CD4-positive, alpha-beta memory T cell (primary cell): ENCODE measurements at regions of chr18 and their contacts with region 1.

Region 1: DNA sequence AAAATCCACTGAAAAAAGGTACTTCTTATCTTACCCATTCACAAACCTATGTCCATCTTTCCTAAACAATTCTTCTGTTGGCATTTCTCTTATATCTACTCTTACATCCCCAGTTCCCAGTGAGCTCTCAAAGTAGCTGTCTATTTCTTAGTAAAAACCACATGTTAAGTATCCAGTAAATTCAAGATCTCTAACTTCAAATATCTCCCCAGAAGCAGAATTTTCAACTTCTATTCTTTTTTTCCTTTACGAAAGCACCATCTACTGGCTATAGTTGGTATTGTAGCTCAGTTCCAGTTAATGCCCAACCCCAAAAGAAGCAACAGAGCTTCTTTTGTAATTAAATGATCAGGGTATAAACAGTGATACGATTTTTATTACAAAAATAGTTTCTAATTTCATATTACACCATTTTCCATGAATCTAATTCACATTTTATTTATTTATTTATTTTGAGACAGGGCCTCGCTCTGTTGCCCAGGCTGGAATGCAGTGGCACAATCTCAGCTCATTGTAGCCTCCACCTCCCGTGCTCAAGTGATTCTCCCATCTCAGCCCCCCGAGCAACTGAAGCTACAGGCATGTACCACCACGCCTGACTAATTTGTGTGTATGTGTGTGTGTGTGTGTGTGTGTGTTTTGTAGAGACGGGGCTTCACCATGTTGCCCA is 28.5 kb downstream of the HRH4 start:
- DNase-seq: peak in 4 of 5 donors; percentile 29 to 53 (median 37)
- H3K4me3 ChIP-seq: no peak overlapping the region
- H3K4me3 Mint-ChIP-seq: peak overlapping the region in 1 of 8 donors; percentile 30
- H3K27ac ChIP-seq: no peak overlapping the region
- H3K27ac Mint-ChIP-seq: peak overlapping the region in 1 of 7 donors; percentile 53
- H3K4me1 ChIP-seq: no peaks in the 10 kb centered on the region
- H3K4me1 Mint-ChIP-seq: peaks cover 12 to 23% (median 15%) of the 10 kb centered on the region in 4 donors
- H3K27me3 ChIP-seq: no peaks in the 10 kb centered on the region
- H3K27me3 Mint-ChIP-seq: peaks cover 0 to 15% of the 10 kb centered on the region in 2 donors

Region 2: GRCh38 chr18:24246143-24246542 is 242.8 kb before region 1 on chr18:
- CTCF ChIA-PET with region 1: no interaction called
- POLR2A ChIA-PET with region 1: no interaction called
- intact Hi-C with region 1: no loop called
- DNase-seq: no peak
- H3K4me3 ChIP-seq: no peak overlapping the region
- H3K4me3 Mint-ChIP-seq: no peak overlapping the region
- H3K27ac ChIP-seq: no peak overlapping the region
- H3K27ac Mint-ChIP-seq: no peak overlapping the region
- H3K4me1 ChIP-seq: no peaks in the 10 kb centered on the region
- H3K4me1 Mint-ChIP-seq: peaks cover 0 to under 1% (median 0%) of the 10 kb centered on the region in 4 donors
- H3K27me3 ChIP-seq: no peaks in the 10 kb centered on the region
- H3K27me3 Mint-ChIP-seq: peaks cover 3 to 13% of the 10 kb centered on the region in 2 donors

Region 3: GRCh38 chr18:24362758-24363157 is 126.2 kb before region 1 on chr18:
- CTCF ChIA-PET with region 1: interaction called, 274 read pairs
- POLR2A ChIA-PET with region 1: interaction called, 3 read pairs
- intact Hi-C with region 1: loop called (anchors 1 kb)
- DNase-seq: no peak
- H3K4me3 ChIP-seq: no peak overlapping the region
- H3K4me3 Mint-ChIP-seq: no peak overlapping the region
- H3K27ac ChIP-seq: no peak overlapping the region
- H3K27ac Mint-ChIP-seq: no peak overlapping the region
- H3K4me1 ChIP-seq: no peaks in the 10 kb centered on the region
- H3K4me1 Mint-ChIP-seq: no peaks in the 10 kb centered on the region
- H3K27me3 ChIP-seq: no peaks in the 10 kb centered on the region
- H3K27me3 Mint-ChIP-seq: no peaks in the 10 kb centered on the region

Region 4: GRCh38 chr18:24432618-24433017 is 56.3 kb before region 1 on chr18:
- CTCF ChIA-PET with region 1: interaction called, 20 read pairs
- POLR2A ChIA-PET with region 1: no interaction called
- intact Hi-C with region 1: no loop called
- DNase-seq: no peak
- H3K4me3 ChIP-seq: no peak overlapping the region
- H3K4me3 Mint-ChIP-seq: no peak overlapping the region
- H3K27ac ChIP-seq: no peak overlapping the region
- H3K27ac Mint-ChIP-seq: no peak overlapping the region
- H3K4me1 ChIP-seq: peaks cover 3% of the 10 kb centered on the region
- H3K4me1 Mint-ChIP-seq: peaks cover 4 to 12% (median 11%) of the 10 kb centered on the region in 4 donors
- H3K27me3 ChIP-seq: no peaks in the 10 kb centered on the region
- H3K27me3 Mint-ChIP-seq: no peaks in the 10 kb centered on the region

Region 5: GRCh38 chr18:24462838-24463775 is 25.9 kb before region 1 on chr18:
- CTCF ChIA-PET with region 1: interaction called, 31 read pairs
- POLR2A ChIA-PET with region 1: no interaction called
- intact Hi-C with region 1: no loop called
- DNase-seq: no peak
- H3K4me3 ChIP-seq: no peak overlapping the region
- H3K4me3 Mint-ChIP-seq: peak overlapping the region in 7 of 8 donors; percentile 50 to 86 (median 77)
- H3K27ac ChIP-seq: no peak overlapping the region
- H3K27ac Mint-ChIP-seq: peak overlapping the region in 2 of 7 donors; percentile 67 to 75
- H3K4me1 ChIP-seq: no peaks in the 10 kb centered on the region
- H3K4me1 Mint-ChIP-seq: peaks cover 13 to 22% (median 16%) of the 10 kb centered on the region in 4 donors
- H3K27me3 ChIP-seq: no peaks in the 10 kb centered on the region
- H3K27me3 Mint-ChIP-seq: no peaks in the 10 kb centered on the region

Region 6: DNA sequence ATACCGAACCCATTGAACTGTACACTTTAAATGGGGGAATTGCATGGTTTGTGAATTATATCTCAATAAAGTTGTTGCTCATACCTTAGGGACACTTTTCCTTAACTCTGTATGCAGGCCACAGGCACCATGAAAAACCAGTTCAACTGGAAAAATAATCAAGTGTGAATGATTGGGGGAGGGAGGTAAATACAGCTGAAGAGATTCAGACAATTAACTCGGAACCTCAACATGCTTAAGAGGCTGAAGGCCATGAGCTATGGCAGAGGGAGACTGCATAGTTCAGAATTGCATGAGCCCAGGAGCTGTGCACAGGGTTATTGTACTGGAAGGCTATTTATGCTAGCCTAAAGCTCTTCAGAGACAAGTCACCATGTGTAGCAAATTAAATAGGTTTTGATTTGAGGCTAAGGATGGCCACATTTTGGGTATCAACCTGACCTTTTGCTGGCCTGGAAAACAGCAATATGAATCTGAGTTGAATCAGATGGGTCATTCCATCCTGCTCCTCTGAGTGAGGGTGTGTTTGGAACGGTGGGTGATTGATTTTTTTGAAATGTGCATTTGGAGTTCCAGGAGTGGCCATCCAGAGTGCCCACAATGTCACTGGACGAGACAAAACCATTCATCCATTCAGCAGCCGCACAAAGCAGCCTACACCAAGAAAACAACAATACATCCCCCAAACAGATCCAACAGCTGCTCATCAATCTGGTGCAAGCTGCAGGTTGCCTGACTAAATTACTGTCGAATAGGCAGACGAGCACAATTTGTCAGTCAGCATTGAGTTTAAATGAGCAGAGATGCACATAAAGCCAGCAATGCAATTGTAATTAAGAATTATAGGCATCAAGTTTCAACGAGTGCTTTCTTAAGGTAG is 13.9 kb after region 1 on chr18:
- CTCF ChIA-PET with region 1: interaction called, 18 read pairs
- POLR2A ChIA-PET with region 1: no interaction called
- intact Hi-C with region 1: no loop called
- DNase-seq: no peak
- H3K4me3 ChIP-seq: no peak overlapping the region
- H3K4me3 Mint-ChIP-seq: no peak overlapping the region
- H3K27ac ChIP-seq: no peak overlapping the region
- H3K27ac Mint-ChIP-seq: no peak overlapping the region
- H3K4me1 ChIP-seq: no peaks in the 10 kb centered on the region
- H3K4me1 Mint-ChIP-seq: no peaks in the 10 kb centered on the region
- H3K27me3 ChIP-seq: no peaks in the 10 kb centered on the region
- H3K27me3 Mint-ChIP-seq: peaks cover 8 to 15% of the 10 kb centered on the region in 2 donors

Region 7: DNA sequence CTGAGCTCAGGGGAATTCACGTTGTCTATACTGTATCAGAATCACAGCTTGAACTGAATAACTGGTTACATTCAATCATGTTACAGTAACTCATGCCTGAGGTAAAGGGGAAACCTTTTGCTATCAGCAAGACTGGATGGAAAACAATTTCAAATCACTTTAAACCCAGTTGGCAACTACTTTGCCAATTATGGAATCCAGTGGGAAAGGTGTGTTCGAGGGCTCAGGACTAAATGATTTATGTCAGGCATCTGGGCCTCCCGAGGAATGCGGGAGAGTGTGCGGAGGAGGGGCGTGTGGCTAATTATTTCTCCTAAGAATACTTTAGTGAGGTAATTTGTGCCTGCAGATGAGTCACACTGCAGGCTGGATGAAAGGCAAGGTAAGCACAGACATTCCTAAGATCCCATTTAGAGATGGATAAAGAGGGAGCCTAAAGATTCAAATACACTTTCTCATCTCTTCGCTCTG is 71.6 kb after region 1 on chr18:
- CTCF ChIA-PET with region 1: no interaction called
- POLR2A ChIA-PET with region 1: no interaction called
- intact Hi-C with region 1: no loop called
- DNase-seq: no peak
- H3K4me3 ChIP-seq: no peak overlapping the region
- H3K4me3 Mint-ChIP-seq: no peak overlapping the region
- H3K27ac ChIP-seq: no peak overlapping the region
- H3K27ac Mint-ChIP-seq: no peak overlapping the region
- H3K4me1 ChIP-seq: no peaks in the 10 kb centered on the region
- H3K4me1 Mint-ChIP-seq: no peaks in the 10 kb centered on the region
- H3K27me3 ChIP-seq: no peaks in the 10 kb centered on the region
- H3K27me3 Mint-ChIP-seq: peaks cover 2 to 5% of the 10 kb centered on the region in 2 donors

Region 8: DNA sequence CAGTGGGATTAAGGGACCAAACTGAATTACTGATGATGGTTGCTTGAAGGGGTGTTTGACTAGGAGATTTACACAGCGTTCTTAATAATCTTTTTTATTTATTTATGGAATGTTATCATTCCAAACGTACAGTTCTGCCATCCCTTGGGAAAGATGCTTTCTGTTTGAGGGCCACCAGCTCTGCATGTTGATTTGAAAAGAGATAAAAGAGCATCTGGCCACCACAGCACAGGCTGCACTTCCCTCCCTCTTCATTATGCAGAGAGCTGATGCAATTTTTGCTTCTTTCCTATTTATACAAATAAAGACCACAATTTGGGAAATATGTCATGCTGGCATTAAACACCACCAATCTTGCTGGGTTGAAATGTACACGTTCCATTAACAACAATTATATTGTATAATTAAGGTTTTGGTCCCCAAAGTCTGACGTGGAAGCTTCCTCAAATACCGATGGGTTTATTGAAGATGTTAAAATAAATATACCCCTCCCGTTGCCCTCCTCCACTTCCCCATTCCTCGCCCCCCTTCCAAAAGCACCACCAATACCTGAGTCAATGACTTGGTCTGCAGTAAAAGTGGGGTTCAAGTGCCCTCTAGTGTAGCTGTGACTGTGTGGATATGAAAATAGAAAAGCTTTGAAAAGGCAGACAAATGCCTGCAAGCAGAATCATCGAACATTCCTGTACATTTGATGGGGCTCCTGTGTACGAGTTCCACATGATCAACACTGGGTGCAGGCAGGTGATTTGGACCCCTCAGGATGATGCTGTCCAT is 183.4 kb after region 1 on chr18:
- CTCF ChIA-PET with region 1: interaction called, 4 read pairs
- POLR2A ChIA-PET with region 1: no interaction called
- intact Hi-C with region 1: loop called (anchors 2 kb)
- DNase-seq: peak in 2 of 5 donors; percentile 7 to 8
- H3K4me3 ChIP-seq: no peak overlapping the region
- H3K4me3 Mint-ChIP-seq: no peak overlapping the region
- H3K27ac ChIP-seq: no peak overlapping the region
- H3K27ac Mint-ChIP-seq: no peak overlapping the region
- H3K4me1 ChIP-seq: no peaks in the 10 kb centered on the region
- H3K4me1 Mint-ChIP-seq: no peaks in the 10 kb centered on the region
- H3K27me3 ChIP-seq: no peaks in the 10 kb centered on the region
- H3K27me3 Mint-ChIP-seq: peaks cover 6 to 7% of the 10 kb centered on the region in 2 donors